Activated T-helper 1 cell treated with anti-CD3 and anti-CD28 coated beads, Interleukin-12 subunit alpha, Interleukin-12 subunit beta, Interleukin-2, Interleukin-4 antibody, amounts not matched to agents 30 ng/mL and 10 ng/mL and 1 ng/mL, durations not matched to agents 14 hours and 24 hours and 36 hours (primary cell): ENCODE measurements at regions of chr16 and their contacts with region 1.

Region 1: GRCh38 chr16:2682209-2683021 is at the start of gene KCTD5:
- DNase-seq: peak; percentile 96
- H3K4me3 Mint-ChIP-seq: peak within 1 kb of the TSS; percentile 99
- H3K27ac Mint-ChIP-seq: peak within 1 kb of the TSS; percentile 97
- H3K4me1 Mint-ChIP-seq: peaks cover 13% of the 10 kb centered on the region
- H3K27me3 Mint-ChIP-seq: peaks cover 2% of the 10 kb centered on the region
- total RNA-seq, gene KCTD5: 63.9 and 69.6 TPM in 2 replicates

Region 2: GRCh38 chr16:1054660-1055556 is 1627.5 kb before region 1 on chr16:
- intact Hi-C with region 1: no loop called
- DNase-seq: no peak
- H3K4me3 Mint-ChIP-seq: no peak overlapping the region
- H3K27ac Mint-ChIP-seq: no peak overlapping the region
- H3K4me1 Mint-ChIP-seq: no peaks in the 10 kb centered on the region
- H3K27me3 Mint-ChIP-seq: no peaks in the 10 kb centered on the region

Region 3: GRCh38 chr16:2205104-2205966 is 477.1 kb before region 1 on chr16 and contains the start of gene MLST8:
- intact Hi-C with region 1: loop called (anchors 1 kb)
- DNase-seq: peak; percentile 90
- H3K4me3 Mint-ChIP-seq: peak within 1 kb of the TSS; percentile 86
- H3K27ac Mint-ChIP-seq: peak within 1 kb of the TSS; percentile 68
- H3K4me1 Mint-ChIP-seq: peaks cover 22% of the 10 kb centered on the region
- H3K27me3 Mint-ChIP-seq: peaks cover 13% of the 10 kb centered on the region
- total RNA-seq, gene MLST8: 57.0 and 61.9 TPM in 2 replicates

Region 4: GRCh38 chr16:2715519-2715918 is 33.1 kb after region 1 on chr16:
- intact Hi-C with region 1: loop called (anchors 1 kb)
- DNase-seq: peak; percentile 83
- H3K4me3 Mint-ChIP-seq: no peak overlapping the region
- H3K27ac Mint-ChIP-seq: no peak overlapping the region
- H3K4me1 Mint-ChIP-seq: no peaks in the 10 kb centered on the region
- H3K27me3 Mint-ChIP-seq: peaks cover 3% of the 10 kb centered on the region

Region 5: DNA sequence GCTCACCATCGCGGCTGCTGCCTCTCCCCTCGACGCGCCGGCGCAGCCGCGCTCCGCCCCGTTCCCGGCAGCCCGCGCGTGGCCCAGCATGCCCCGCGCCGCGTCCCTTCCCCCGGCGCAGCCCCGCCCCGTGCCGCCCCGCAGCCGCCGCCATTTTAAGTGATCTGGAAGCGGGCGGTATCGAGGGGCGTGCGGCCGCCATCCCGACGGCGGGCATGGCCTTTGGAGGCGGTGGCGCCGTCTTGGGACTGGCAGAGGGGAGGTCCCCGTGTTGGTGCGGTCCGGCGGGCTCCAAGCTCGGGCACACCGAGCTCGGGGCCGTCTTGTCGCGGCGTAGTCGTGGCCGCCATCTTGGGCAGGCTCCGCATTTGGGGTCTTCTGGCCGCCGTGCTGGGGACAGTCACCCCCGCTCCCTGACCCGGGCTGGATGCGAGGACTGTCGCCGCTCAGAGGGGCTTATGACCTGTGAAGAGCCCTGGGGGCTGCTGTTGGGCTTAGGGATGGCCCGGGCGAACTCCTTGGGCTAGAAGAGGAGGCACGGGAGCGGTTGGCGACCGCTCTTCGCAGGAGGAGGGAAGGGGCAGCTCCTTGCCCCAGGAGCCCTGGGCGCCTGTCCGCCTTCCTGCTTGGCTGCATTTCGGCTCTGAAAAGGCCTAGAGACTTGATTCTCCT is 95.0 kb after region 1 on chr16 and contains the start of gene ELOB:
- intact Hi-C with region 1: loop called (anchors 5 kb)
- DNase-seq: peak; percentile 87
- H3K4me3 Mint-ChIP-seq: peak within 1 kb of the TSS; percentile 93
- H3K27ac Mint-ChIP-seq: peak within 1 kb of the TSS; percentile 94
- H3K4me1 Mint-ChIP-seq: peaks cover 27% of the 10 kb centered on the region
- H3K27me3 Mint-ChIP-seq: no peaks in the 10 kb centered on the region
- total RNA-seq, gene ELOB: 256 and 277 TPM in 2 replicates